ENCODE measurements at regions of chr13 and their contacts with region 1.

Region 1: GRCh38 chr13:33285420-33286124 is at the start of gene STARD13:
- DNase-seq: peak; percentile 96
- ATAC-seq: peak; percentile 89
- H3K4me3 ChIP-seq: peak within 1 kb of the TSS; percentile 83
- H3K27ac ChIP-seq: peak within 1 kb of the TSS; percentile 95
- H3K4me1 ChIP-seq: peaks cover 37% of the 10 kb centered on the region
- H3K27me3 ChIP-seq: no peaks in the 10 kb centered on the region
- CTCF ChIP-seq: peak; percentile 25; the same call in 1 of the 2 replicates
- total RNA-seq, gene STARD13: 24.3 and 26.6 TPM in 2 replicates

Region 2: GRCh38 chr13:32504263-32504927 is 781.2 kb before region 1 on chr13:
- CTCF ChIA-PET with region 1: no interaction called
- POLR2A ChIA-PET with region 1: no interaction called
- intact Hi-C with region 1: no loop called
- DNase-seq: no peak
- ATAC-seq: no peak
- H3K4me3 ChIP-seq: no peak overlapping the region
- H3K27ac ChIP-seq: no peak overlapping the region
- H3K4me1 ChIP-seq: no peaks in the 10 kb centered on the region
- H3K27me3 ChIP-seq: no peaks in the 10 kb centered on the region
- CTCF ChIP-seq: no peak

Region 3: DNA sequence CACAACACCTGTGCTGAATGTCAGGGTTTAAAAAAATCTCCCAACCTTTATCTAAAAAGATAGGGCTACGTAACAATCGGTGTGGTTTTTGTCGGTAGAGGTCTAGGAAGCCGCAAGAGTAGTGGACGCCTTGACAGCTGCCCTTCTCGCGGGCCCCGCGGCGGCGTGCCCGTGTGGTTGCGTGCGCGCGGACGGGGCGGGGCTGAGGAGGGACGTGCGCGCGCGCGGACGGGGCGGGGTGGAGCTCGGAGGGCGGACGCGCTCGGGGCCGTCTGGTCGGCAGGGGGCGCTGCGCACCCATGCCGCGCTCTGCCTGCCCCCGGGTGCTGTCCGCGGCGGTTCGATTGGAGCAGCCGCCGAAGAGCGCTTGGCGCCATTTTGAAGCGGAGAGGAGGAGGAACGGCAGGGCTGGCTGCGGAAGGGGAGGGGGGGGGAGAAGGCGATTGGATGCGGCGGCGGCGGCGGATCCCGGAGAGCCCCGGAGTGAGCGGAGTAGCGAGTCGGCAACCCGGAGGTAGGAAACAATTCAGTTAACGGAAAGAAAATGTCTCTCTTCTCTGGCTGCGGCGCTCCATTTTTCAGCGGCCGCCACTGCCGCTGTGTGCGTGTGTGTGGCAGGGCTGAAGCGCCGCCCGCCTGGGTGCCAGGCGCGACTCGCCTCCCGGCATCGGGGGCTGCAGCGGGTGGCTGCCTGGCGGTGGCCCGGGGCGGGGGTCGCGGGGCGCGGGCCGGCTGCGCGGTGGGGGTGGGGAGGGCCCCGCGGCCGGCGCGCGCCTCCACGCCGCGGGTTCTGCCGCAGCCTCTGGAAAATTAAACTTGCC is 699.3 kb before region 1 on chr13 and contains the start of gene PDS5B:
- CTCF ChIA-PET with region 1: no interaction called
- POLR2A ChIA-PET with region 1: no interaction called
- intact Hi-C with region 1: loop called (anchors 10 kb)
- DNase-seq: peak; percentile 92
- ATAC-seq: peak; percentile 84
- H3K4me3 ChIP-seq: peak within 1 kb of the TSS; percentile 96
- H3K27ac ChIP-seq: peak within 1 kb of the TSS; percentile 63
- H3K4me1 ChIP-seq: peaks cover 23% of the 10 kb centered on the region
- H3K27me3 ChIP-seq: no peaks in the 10 kb centered on the region
- CTCF ChIP-seq: peak; percentile 74
- total RNA-seq, gene PDS5B: 19.5 and 20.3 TPM in 2 replicates

Region 4: GRCh38 chr13:33125821-33126570 is 159.6 kb before region 1 on chr13:
- CTCF ChIA-PET with region 1: no interaction called
- POLR2A ChIA-PET with region 1: no interaction called
- intact Hi-C with region 1: loop called (anchors 10 kb)
- DNase-seq: peak; percentile 90
- ATAC-seq: peak; percentile 98
- H3K4me3 ChIP-seq: no peak overlapping the region
- H3K27ac ChIP-seq: peak overlapping the region; percentile 80
- H3K4me1 ChIP-seq: peaks cover 31% of the 10 kb centered on the region
- H3K27me3 ChIP-seq: no peaks in the 10 kb centered on the region
- CTCF ChIP-seq: no peak

Region 5: DNA sequence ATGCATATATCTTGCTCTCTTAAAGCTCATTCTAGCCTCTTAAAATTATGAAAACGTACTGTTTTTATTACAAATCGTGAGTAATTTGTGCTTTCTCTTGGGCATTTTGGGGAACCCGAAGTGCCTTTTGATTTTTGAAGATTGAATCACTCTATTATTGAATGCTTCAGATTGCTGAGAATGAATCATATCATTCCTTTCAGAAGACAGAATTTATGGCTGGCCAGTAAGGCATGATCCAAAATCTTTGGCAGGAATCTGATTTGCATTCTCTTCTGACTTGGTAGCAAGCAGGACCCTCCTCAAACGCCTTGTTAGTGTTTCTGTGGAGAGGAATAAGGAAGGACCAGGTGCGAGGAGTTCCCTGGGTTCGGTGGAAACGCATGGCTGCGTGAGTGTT is 49.6 kb before region 1 on chr13:
- CTCF ChIA-PET with region 1: no interaction called
- POLR2A ChIA-PET with region 1: no interaction called
- intact Hi-C with region 1: loop called (anchors 5 kb)
- DNase-seq: peak; percentile 85
- ATAC-seq: peak; percentile 78
- H3K4me3 ChIP-seq: peak overlapping the region; percentile 41; the same call in 1 of the 2 replicates
- H3K27ac ChIP-seq: peak overlapping the region; percentile 61
- H3K4me1 ChIP-seq: peaks cover 43% of the 10 kb centered on the region
- H3K27me3 ChIP-seq: no peaks in the 10 kb centered on the region
- CTCF ChIP-seq: no peak

Region 6: GRCh38 chr13:33349986-33350826 is 64.6 kb after region 1 on chr13:
- CTCF ChIA-PET with region 1: interaction called, 7 read pairs
- POLR2A ChIA-PET with region 1: interaction called, 5 read pairs
- intact Hi-C with region 1: loop called (anchors 2 kb)
- DNase-seq: peak; percentile 37
- ATAC-seq: peak; percentile 62
- H3K4me3 ChIP-seq: peak overlapping the region; percentile 96
- H3K27ac ChIP-seq: peak overlapping the region; percentile 26
- H3K4me1 ChIP-seq: peaks cover 31% of the 10 kb centered on the region
- H3K27me3 ChIP-seq: no peaks in the 10 kb centered on the region
- CTCF ChIP-seq: no peak

Region 7: DNA sequence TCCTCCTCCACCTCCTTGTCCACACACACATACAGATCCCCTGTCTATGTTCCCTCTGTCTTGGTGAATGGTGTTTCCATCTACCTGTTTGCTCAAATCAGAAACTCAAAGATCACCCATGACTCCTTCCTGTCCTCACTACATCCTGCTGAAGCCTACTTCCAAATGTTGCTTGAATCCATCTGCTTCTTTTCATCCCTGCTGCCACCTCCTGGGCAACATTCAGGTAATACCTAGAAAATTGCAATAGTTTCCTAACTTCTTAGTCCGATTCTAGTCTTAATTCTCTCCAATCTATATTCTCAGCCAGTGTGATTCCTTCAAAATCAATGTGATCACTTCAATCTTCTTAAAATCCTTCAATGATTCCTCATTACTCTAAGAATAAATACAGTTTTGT is 155.4 kb after region 1 on chr13:
- CTCF ChIA-PET with region 1: no interaction called
- POLR2A ChIA-PET with region 1: no interaction called
- intact Hi-C with region 1: loop called (anchors 10 kb)
- DNase-seq: peak; percentile 60
- ATAC-seq: peak; percentile 46; the same call in 1 of the 2 replicates
- H3K4me3 ChIP-seq: no peak overlapping the region
- H3K27ac ChIP-seq: no peak overlapping the region
- H3K4me1 ChIP-seq: peaks cover 20% of the 10 kb centered on the region
- H3K27me3 ChIP-seq: no peaks in the 10 kb centered on the region
- CTCF ChIP-seq: peak; percentile 64

Region 8: GRCh38 chr13:33537026-33537425 is 251.5 kb after region 1 on chr13:
- CTCF ChIA-PET with region 1: no interaction called
- POLR2A ChIA-PET with region 1: no interaction called
- intact Hi-C with region 1: loop called (anchors 1 kb)
- DNase-seq: peak; percentile 88
- ATAC-seq: peak; percentile 98
- H3K4me3 ChIP-seq: peak overlapping the region; percentile 53; the same call in 1 of the 2 replicates
- H3K27ac ChIP-seq: peak overlapping the region; percentile 98
- H3K4me1 ChIP-seq: peaks cover 34% of the 10 kb centered on the region
- H3K27me3 ChIP-seq: no peaks in the 10 kb centered on the region
- CTCF ChIP-seq: no peak